ENCODE measurements at regions of chr10 and their contacts with region 1.

Region 1: GRCh38 chr10:99484603-99485581 is 47.9 kb upstream of the NKX2-3 start:
- DNase-seq: no peak
- ATAC-seq: peak; percentile 90
- H3K4me3 ChIP-seq: no peak overlapping the region
- H3K27ac ChIP-seq: no peak overlapping the region
- H3K4me1 ChIP-seq: peaks cover 0 to 8% of the 10 kb centered on the region in 2 experiments; a peak in 1 of 4 replicates
- H3K27me3 ChIP-seq: peaks cover 27% of the 10 kb centered on the region
- CTCF ChIP-seq: peak; percentile 79 to 87 (median 84)
- POLR2A ChIP-seq: no peak
- RAD21 ChIP-seq: peak; percentile 79

Region 2: DNA sequence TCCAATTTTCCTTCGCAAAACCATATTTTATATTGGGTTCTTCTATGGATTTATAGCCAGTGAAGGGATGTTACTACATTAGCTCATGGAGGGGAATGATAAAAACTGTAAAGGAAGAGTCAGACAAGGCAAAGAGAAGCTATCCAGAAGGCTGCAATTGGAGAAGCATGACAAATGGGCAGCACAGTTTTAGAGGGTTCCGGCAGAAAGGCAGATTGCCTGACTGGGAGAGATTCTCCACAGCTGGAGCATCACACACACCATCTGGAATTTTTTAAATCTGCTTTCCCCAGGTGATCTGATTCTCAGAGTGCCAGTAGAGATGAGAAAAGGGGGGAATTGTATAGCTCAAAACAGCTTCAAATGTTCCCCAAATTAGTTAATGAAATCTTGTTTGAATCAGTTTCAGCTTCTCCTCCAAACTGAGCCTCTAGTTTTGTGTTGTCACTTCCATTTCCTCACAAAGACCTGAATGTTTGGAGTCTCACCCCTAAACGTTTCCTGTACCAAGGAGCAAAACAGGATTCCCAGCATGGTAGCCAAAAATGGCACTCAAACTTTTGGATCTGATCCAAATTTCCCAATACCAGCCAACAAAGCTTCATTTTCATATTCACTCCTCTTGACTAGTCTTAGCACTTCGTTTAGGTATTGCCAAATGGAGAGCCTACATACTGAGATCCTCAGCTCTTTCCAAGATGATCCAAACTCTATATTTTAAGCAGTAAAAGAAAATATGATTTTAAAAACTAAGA is 426.8 kb before region 1 on chr10:
- CTCF ChIA-PET with region 1: no interaction called
- POLR2A ChIA-PET with region 1: no interaction called
- RAD21 ChIA-PET with region 1: no interaction called
- intact Hi-C with region 1: no loop called
- DNase-seq: no peak
- ATAC-seq: no peak
- H3K4me3 ChIP-seq: no peak overlapping the region
- H3K27ac ChIP-seq: no peak overlapping the region
- H3K4me1 ChIP-seq: no peaks in the 10 kb centered on the region
- H3K27me3 ChIP-seq: peaks cover 18% of the 10 kb centered on the region
- CTCF ChIP-seq: no peak
- POLR2A ChIP-seq: no peak
- RAD21 ChIP-seq: no peak

Region 3: GRCh38 chr10:99470327-99470726 is 14.6 kb before region 1 on chr10:
- CTCF ChIA-PET with region 1: interaction called, 13 read pairs
- POLR2A ChIA-PET with region 1: no interaction called
- RAD21 ChIA-PET with region 1: no interaction called
- intact Hi-C with region 1: no loop called
- DNase-seq: no peak
- ATAC-seq: peak; percentile 63
- H3K4me3 ChIP-seq: no peak overlapping the region
- H3K27ac ChIP-seq: no peak overlapping the region
- H3K4me1 ChIP-seq: no peaks in the 10 kb centered on the region
- H3K27me3 ChIP-seq: peaks cover 42% of the 10 kb centered on the region
- CTCF ChIP-seq: no peak
- POLR2A ChIP-seq: no peak
- RAD21 ChIP-seq: no peak

Region 4: GRCh38 chr10:99506416-99506815 is 21.5 kb after region 1 on chr10:
- CTCF ChIA-PET with region 1: interaction called, 5 read pairs
- POLR2A ChIA-PET with region 1: no interaction called
- RAD21 ChIA-PET with region 1: no interaction called
- intact Hi-C with region 1: loop called (anchors 1 kb)
- DNase-seq: no peak
- ATAC-seq: no peak
- H3K4me3 ChIP-seq: no peak overlapping the region
- H3K27ac ChIP-seq: no peak overlapping the region
- H3K4me1 ChIP-seq: no peaks in the 10 kb centered on the region
- H3K27me3 ChIP-seq: peaks cover 20% of the 10 kb centered on the region
- CTCF ChIP-seq: no peak
- POLR2A ChIP-seq: no peak
- RAD21 ChIP-seq: no peak

Region 5: GRCh38 chr10:99548041-99548530 is 63.2 kb after region 1 on chr10:
- CTCF ChIA-PET with region 1: interaction called, 13 read pairs
- POLR2A ChIA-PET with region 1: no interaction called
- RAD21 ChIA-PET with region 1: no interaction called
- intact Hi-C with region 1: loop called (anchors 1 kb)
- DNase-seq: peak; percentile 50
- ATAC-seq: peak; percentile 98
- H3K4me3 ChIP-seq: no peak overlapping the region
- H3K27ac ChIP-seq: no peak overlapping the region
- H3K4me1 ChIP-seq: peaks cover 0 to 10% of the 10 kb centered on the region in 2 experiments; a peak in 1 of 4 replicates
- H3K27me3 ChIP-seq: peaks cover 26% of the 10 kb centered on the region; the same call in 1 of the 2 replicates
- CTCF ChIP-seq: peak; percentile 71 to 84 (median 81)
- POLR2A ChIP-seq: no peak
- RAD21 ChIP-seq: peak; percentile 71

Region 6: DNA sequence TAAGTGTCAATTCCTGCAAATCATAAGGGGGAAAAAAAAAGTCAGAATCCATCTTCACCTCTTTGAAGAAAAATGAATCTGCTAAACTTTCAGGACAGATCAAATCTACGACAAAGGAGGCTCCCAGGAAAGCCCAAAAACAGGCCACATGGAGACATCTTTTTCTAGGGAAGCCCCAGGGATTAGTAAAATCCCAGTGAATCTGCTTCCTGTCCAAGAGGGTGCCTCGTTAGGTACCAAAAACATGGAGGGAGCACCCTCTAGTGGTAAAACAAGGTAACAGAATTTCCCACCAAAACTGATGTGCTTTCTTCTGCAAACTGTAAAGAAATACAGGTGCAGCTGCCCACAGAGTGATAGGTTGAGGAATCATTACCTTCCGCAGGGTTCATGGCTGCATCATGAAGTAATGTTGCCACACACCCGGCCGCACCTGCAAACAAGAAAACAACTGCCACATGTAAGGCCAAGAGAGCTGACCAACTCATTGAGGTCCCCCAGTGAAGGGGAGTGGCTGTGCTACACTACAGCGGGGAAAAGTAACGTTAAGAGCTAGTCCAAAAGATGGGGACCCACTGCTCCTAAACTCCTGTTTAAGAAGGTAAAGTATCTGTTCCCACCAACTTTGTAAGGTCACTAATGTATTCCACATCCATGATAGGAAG is 127.4 kb after region 1 on chr10:
- CTCF ChIA-PET with region 1: interaction called, 16 read pairs
- POLR2A ChIA-PET with region 1: no interaction called
- RAD21 ChIA-PET with region 1: interaction called in 1 of 2 experiments, 3 read pairs
- intact Hi-C with region 1: loop called (anchors 1 kb)
- DNase-seq: peak; percentile 59
- ATAC-seq: peak; percentile 88
- H3K4me3 ChIP-seq: no peak overlapping the region
- H3K27ac ChIP-seq: no peak overlapping the region
- H3K4me1 ChIP-seq: no peaks in the 10 kb centered on the region
- H3K27me3 ChIP-seq: no peaks in the 10 kb centered on the region
- CTCF ChIP-seq: peak in 2 of 3 experiments; percentile 87 to 97; a peak in 4 of 6 replicates
- POLR2A ChIP-seq: no peak
- RAD21 ChIP-seq: no peak

Measured in HCT116 (cell line).